Mammary epithelial cell (primary cell): ENCODE measurements at regions of chr1 and their contacts with region 1.

Region 1: DNA sequence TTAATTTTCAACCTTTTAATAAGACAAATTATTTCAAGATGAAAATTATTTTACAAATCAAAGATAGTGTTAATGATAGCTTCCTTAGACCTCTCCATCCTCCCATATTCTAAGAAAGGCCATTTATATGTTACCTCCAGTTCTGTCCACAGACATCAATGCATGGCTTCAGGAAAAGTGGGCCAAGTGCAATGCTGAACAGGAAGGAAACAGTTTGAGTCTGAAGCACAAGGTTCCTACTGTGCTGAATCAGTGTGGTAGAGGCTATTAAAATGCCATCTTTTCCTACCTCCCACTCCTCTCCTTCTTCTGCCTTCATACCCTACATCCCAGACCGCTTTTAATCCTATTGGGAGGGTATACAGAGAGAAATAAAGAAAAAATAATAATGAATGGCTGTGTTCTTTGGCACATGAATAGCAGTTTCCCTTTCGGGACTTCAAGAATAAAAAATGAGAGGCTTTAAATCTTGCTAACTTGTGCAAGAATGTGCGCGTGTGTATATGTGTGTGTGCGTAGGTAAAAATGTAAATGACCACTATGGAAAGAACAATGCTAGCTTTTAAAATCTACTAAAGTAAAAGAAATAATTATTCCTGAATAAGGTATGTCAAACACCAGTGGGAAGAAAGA is 62.6 kb upstream of the C1orf105 start:
- DNase-seq: no peak
- H3K4me3 ChIP-seq: peak overlapping the region in 1 of 3 experiments; percentile 6
- H3K27ac ChIP-seq: peak overlapping the region; percentile 76
- H3K4me1 ChIP-seq: peaks cover 49% of the 10 kb centered on the region
- H3K27me3 ChIP-seq: no peaks in the 10 kb centered on the region
- CTCF ChIP-seq: no peak

Region 2: GRCh38 chr1:172144445-172145061 is 213.3 kb before region 1 on chr1:
- CTCF ChIA-PET with region 1: interaction called, 3 read pairs
- dilution Hi-C with region 1: no loop called
- in situ Hi-C with region 1: no loop called
- intact Hi-C with region 1: loop called (anchors 5 kb)
- DNase-seq: no peak
- H3K4me3 ChIP-seq: no peak overlapping the region
- H3K27ac ChIP-seq: no peak overlapping the region
- H3K4me1 ChIP-seq: peaks cover 29% of the 10 kb centered on the region
- H3K27me3 ChIP-seq: no peaks in the 10 kb centered on the region
- CTCF ChIP-seq: no peak

Region 3: DNA sequence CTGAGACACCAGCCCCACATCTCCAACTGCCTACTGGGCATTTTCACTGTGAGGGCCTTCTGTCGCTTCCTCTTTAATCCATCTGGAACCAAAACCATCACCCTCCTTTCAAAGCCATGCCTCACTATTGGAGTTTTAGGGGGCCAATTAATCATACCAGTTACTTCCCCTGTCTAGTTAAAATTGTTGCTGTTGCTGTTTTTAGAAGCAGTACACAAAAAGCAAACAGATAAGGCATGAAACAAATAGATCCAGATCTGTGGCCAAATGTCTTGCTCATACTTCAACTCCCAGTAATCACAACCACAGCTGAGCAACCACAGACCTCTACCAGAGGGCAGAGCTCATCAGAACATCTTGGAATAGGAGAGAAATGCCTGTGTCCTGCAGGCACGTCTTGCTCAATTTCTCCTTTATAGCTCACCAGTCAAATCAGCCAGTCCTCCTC is 71.2 kb before region 1 on chr1:
- CTCF ChIA-PET with region 1: no interaction called
- dilution Hi-C with region 1: no loop called
- in situ Hi-C with region 1: no loop called
- intact Hi-C with region 1: loop called (anchors 10 kb)
- DNase-seq: peak; percentile 84
- H3K4me3 ChIP-seq: no peak overlapping the region
- H3K27ac ChIP-seq: no peak overlapping the region
- H3K4me1 ChIP-seq: peaks cover 11% of the 10 kb centered on the region
- H3K27me3 ChIP-seq: no peaks in the 10 kb centered on the region
- CTCF ChIP-seq: peak in 1 of 2 donors; percentile 36

Region 4: DNA sequence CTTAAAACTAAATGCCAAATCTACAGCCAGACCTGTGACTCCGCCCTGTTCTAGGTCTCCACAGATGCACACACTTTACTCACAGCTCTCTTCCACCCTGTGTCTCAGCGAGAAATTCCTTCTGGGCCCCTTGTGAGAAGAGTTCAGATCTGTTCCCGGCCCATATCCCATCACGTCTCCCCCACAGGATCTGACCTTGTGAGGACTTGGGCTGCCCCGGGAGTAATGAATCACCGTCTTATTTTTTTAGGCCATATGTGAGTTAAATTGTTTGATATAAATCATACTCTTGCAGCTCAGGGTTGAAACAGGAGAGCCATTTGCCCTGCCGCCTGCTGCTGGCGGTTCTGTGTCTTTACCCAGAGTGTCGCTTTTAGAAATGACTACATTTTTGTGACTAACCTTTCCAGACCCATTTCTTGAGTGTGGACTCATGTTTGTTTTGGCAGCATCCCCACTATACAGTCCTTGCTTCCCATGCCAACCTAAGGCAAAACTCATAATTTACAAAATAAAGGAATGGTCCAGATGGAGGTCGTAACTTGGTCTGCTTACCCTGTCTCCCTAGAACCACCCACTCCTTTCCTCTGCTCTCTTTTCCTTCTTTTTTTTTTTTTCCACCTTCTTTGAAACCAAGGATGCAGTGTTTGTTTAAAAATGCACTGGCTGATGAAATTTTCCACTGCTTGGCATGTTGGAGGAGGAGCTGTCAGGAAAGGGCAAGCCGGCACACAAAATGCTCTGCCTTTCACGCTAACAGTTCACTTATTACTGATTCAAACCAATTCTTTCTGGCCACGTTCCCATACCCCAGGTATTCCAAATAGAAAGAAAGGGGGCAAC is 35.4 kb before region 1 on chr1:
- CTCF ChIA-PET with region 1: interaction called, 16 read pairs
- dilution Hi-C with region 1: no loop called
- in situ Hi-C with region 1: no loop called
- intact Hi-C with region 1: loop called (anchors 1 kb)
- DNase-seq: peak; percentile 67
- H3K4me3 ChIP-seq: peak overlapping the region; percentile 12 to 40 (median 32)
- H3K27ac ChIP-seq: peak overlapping the region; percentile 93
- H3K4me1 ChIP-seq: peaks cover 45% of the 10 kb centered on the region
- H3K27me3 ChIP-seq: no peaks in the 10 kb centered on the region
- CTCF ChIP-seq: peak in 1 of 2 donors; percentile 16

Region 5: DNA sequence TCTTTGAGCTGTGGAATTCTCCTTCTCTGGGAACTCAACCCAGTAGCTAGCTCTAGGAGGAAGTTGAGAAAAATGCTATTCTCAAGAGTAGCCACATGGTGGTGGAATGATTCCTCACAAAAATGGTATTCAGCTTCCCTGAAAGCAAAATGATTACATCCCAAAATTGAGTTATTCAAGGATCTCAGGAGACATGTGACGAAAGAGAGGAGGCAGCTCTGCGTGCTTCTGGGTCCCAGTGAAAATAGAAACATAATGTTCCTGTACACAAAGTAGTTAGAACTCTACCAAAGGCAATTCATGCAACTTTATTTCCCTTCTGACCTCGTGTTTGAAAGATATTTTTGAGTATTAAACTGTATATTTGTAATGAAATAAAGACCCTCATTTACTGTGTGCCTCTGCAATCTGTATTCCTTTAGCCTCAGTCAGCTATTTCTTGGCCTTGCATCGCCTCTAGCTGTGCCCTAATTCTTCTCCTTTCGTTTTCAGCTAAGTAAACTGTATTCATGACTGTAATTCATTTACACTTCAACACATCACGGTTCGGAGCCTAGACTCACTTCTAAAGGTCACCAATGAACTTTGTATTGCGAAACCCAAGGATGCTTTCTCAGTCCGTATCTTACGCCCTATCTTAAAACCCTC is 468.4 kb after region 1 on chr1:
- CTCF ChIA-PET with region 1: no interaction called
- dilution Hi-C with region 1: no loop called
- in situ Hi-C with region 1: no loop called
- intact Hi-C with region 1: no loop called
- DNase-seq: peak; percentile 68
- H3K4me3 ChIP-seq: no peak overlapping the region
- H3K27ac ChIP-seq: no peak overlapping the region
- H3K4me1 ChIP-seq: peaks cover 5% of the 10 kb centered on the region
- H3K27me3 ChIP-seq: no peaks in the 10 kb centered on the region
- CTCF ChIP-seq: peak; percentile 56 to 73

Region 6: GRCh38 chr1:173161510-173162221 is 803.8 kb after region 1 on chr1:
- CTCF ChIA-PET with region 1: interaction called, 12 read pairs
- dilution Hi-C with region 1: no loop called
- in situ Hi-C with region 1: no loop called
- intact Hi-C with region 1: no loop called
- DNase-seq: peak; percentile 87
- H3K4me3 ChIP-seq: no peak overlapping the region
- H3K27ac ChIP-seq: peak overlapping the region; percentile 37
- H3K4me1 ChIP-seq: peaks cover 17% of the 10 kb centered on the region
- H3K27me3 ChIP-seq: no peaks in the 10 kb centered on the region
- CTCF ChIP-seq: no peak